WTC11 (cell line): ENCODE measurements at regions of chr3 and their contacts with region 1.

Region 1: DNA sequence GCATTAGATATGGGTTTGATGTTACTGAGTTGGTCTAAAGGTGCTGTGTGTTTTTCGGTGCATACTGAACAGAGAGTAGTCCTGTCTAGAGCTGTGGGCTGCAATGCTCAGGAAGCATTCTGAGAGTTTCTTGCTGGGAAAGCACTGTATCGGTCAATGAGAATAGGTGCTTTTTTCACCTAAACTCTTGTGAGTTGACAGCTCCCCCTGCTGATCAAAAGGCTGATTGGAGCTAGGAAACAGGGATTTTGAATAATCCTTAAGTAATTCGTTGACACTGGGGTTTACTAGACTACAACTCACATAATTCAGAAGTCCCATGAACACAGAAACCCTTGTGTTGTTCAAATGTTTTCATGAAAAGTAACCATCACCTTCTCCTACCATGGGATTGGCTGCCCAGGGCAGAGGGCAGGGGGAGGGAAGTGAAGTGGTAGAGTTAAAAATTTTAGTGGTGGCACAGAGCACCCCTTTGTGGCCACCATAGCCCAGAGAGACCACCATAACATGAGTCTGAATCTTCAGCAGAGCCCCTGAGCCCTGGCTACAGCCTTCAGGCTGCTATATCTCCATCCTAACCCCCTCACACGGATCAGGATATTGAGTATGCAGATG is 13.0 kb upstream of the MANF start:
- DNase-seq: peak; percentile 67
- ATAC-seq: peak; percentile 89
- H3K4me3 Mint-ChIP-seq: no peak overlapping the region
- H3K27ac Mint-ChIP-seq: no peak overlapping the region
- H3K4me1 Mint-ChIP-seq: no peaks in the 10 kb centered on the region
- H3K27me3 Mint-ChIP-seq: no peaks in the 10 kb centered on the region
- CTCF ChIP-seq: peak; percentile 25; the same call in 1 of the 2 replicates

Region 2: DNA sequence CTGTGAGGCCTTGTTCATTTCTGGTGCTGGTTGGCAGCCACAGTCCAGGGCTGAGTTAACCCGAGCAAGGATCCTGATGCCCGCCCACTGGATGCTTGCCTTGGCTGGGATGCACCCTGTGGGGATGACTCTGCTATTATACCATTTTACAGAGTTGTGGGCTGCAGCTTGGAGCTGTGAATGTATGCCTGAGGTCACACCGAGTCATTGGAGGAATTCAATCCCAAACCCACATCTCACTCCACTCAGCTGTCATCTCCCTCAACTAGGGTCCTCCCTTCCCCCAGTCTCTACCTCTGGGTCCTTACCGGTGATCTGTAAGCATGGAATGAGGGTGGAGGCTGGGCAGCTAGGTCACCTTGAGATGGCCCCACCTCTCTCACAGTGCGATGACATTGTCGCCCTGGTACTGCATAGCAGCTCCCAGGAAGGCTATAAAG is 733.0 kb before region 1 on chr3:
- CTCF ChIA-PET with region 1: no interaction called
- POLR2A ChIA-PET with region 1: interaction called, 11 read pairs
- DNase-seq: no peak
- ATAC-seq: no peak
- H3K4me3 Mint-ChIP-seq: no peak overlapping the region
- H3K27ac Mint-ChIP-seq: no peak overlapping the region
- H3K4me1 Mint-ChIP-seq: peaks cover 38% of the 10 kb centered on the region
- H3K27me3 Mint-ChIP-seq: no peaks in the 10 kb centered on the region
- CTCF ChIP-seq: no peak

Region 3: DNA sequence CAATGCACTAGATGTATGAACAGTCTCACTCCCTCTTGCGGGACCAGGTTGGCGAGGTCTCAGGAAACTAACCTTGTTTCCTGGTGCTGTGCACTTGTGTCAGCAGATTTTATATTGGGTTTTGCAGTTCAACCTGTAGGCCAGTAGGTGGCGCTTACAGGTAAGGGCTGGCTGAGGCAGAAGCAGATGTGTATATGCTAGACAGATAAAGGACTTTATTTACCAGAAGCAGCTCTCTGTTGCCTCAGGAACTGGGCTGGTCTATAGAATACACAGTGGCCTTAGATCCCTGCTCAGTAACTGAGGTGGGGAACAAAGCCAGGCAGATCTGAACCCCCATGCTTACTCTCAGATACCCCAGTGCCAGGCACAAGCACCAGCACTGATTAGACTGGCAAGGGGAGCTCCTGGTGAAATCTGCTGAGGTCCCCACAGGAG is 400.5 kb before region 1 on chr3:
- CTCF ChIA-PET with region 1: interaction called, 17 read pairs
- POLR2A ChIA-PET with region 1: no interaction called
- DNase-seq: peak; percentile 48
- ATAC-seq: peak; percentile 98
- H3K4me3 Mint-ChIP-seq: no peak overlapping the region
- H3K27ac Mint-ChIP-seq: no peak overlapping the region; the same call in 1 of the 2 replicates
- H3K4me1 Mint-ChIP-seq: peaks cover 11% of the 10 kb centered on the region
- H3K27me3 Mint-ChIP-seq: no peaks in the 10 kb centered on the region
- CTCF ChIP-seq: peak; percentile 90

Region 4: GRCh38 chr3:51445544-51446280 is 73.7 kb after region 1 on chr3:
- CTCF ChIA-PET with region 1: no interaction called
- POLR2A ChIA-PET with region 1: no interaction called
- DNase-seq: no peak
- ATAC-seq: no peak
- H3K4me3 Mint-ChIP-seq: no peak overlapping the region
- H3K27ac Mint-ChIP-seq: no peak overlapping the region
- H3K4me1 Mint-ChIP-seq: no peaks in the 10 kb centered on the region
- H3K27me3 Mint-ChIP-seq: no peaks in the 10 kb centered on the region
- CTCF ChIP-seq: no peak